GM23248 (cell line): ENCODE measurements at regions of chr2 and their contacts with region 1.

Region 1: DNA sequence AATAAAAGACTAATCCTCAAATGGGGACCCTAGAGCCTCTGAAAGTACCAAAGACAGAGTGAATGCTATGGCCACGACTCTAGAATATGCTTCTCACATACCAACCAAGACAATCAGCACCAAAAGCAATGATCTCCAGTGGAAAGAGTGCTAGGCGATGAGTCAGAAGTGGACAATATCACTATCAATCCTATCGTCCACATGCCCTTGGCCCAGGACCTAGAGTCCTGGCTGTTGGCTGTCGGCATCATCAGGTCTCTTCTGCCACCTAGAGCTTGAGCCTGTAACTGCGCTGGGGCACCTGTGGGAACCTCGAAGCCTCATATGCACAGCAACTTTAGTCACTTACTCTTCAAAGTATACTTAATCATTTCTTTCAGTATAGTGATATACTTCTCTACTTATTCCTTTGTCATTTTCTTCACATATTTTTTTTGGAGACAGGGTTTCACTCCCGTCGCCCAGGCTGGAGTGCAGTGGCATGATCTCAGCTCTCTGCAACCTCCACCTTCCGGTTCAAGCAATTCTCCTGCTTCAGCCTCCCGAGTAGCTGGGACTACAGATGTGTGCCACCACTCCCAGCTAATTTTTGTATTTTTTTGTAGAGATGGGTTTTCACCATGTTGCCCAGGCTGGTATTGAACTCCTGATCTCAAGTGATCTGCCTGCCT is 29.7 kb downstream of the NOL10 start:
- DNase-seq: peak; percentile 86
- H3K4me3 ChIP-seq: no peak overlapping the region
- H3K27ac ChIP-seq: no peak overlapping the region
- H3K4me1 ChIP-seq: peaks cover 29% of the 10 kb centered on the region
- H3K27me3 ChIP-seq: no peaks in the 10 kb centered on the region

Region 2: GRCh38 chr2:10122386-10123280 is 537.4 kb before region 1 on chr2 and contains the start of gene RRM2:
- in situ Hi-C with region 1: loop called (anchors 25 kb)
- DNase-seq: peak; percentile 96
- H3K4me3 ChIP-seq: peak within 1 kb of the TSS; percentile 80
- H3K27ac ChIP-seq: peak within 1 kb of the TSS; percentile 83
- H3K4me1 ChIP-seq: peaks cover 29% of the 10 kb centered on the region
- H3K27me3 ChIP-seq: no peaks in the 10 kb centered on the region
- total RNA-seq, gene RRM2: 17.6 and 23.5 TPM in 2 replicates

Region 3: GRCh38 chr2:10812362-10813162 is 152.5 kb after region 1 on chr2 and contains the start of gene PDIA6:
- in situ Hi-C with region 1: no loop called
- DNase-seq: peak; percentile 99
- H3K4me3 ChIP-seq: peak within 1 kb of the TSS; percentile 86
- H3K27ac ChIP-seq: peak within 1 kb of the TSS; percentile 67
- H3K4me1 ChIP-seq: peaks cover 17% of the 10 kb centered on the region
- H3K27me3 ChIP-seq: no peaks in the 10 kb centered on the region
- total RNA-seq, gene PDIA6: 363 and 367 TPM in 2 replicates